ENCODE measurements at regions of chr11 and their contacts with region 1.

Region 1: GRCh38 chr11:104968355-104968855 is at the start of gene CASP4:
- DNase-seq: no peak
- H3K4me3 Mint-ChIP-seq: peak within 1 kb of the TSS; percentile 86
- H3K27ac Mint-ChIP-seq: peak within 1 kb of the TSS; percentile 75
- H3K4me1 Mint-ChIP-seq: peaks cover 34% of the 10 kb centered on the region
- H3K27me3 Mint-ChIP-seq: no peaks in the 10 kb centered on the region
- total RNA-seq, gene CASP4: 31.1 and 32.0 TPM in 2 replicates

Region 2: DNA sequence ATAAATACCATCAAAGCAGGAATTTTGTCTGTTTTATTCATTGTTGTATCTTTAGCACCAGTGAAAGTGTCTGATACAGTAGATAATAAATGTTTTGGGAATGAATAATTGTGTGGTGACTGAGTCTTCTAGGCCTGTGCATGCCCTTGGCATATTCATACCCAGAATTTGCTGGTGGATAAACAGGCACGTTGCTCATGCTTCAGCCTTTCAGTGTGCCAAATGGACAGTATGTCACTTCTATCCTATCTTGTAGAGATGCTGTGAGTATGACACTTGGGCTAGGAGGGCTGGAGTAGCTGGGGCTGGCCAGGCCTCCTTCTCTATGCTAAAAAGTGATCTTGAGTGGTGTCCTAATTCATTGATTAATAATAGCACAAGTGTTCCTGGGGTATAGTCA is 1219.2 kb before region 1 on chr11:
- intact Hi-C with region 1: no loop called
- DNase-seq: no peak
- H3K4me3 Mint-ChIP-seq: no peak overlapping the region
- H3K27ac Mint-ChIP-seq: no peak overlapping the region
- H3K4me1 Mint-ChIP-seq: no peaks in the 10 kb centered on the region
- H3K27me3 Mint-ChIP-seq: no peaks in the 10 kb centered on the region

Region 3: GRCh38 chr11:104918113-104918824 is 50.1 kb before region 1 on chr11:
- intact Hi-C with region 1: loop called (anchors 5 kb)
- DNase-seq: no peak
- H3K4me3 Mint-ChIP-seq: peak overlapping the region; percentile 81
- H3K27ac Mint-ChIP-seq: peak overlapping the region; percentile 71
- H3K4me1 Mint-ChIP-seq: peaks cover 37% of the 10 kb centered on the region
- H3K27me3 Mint-ChIP-seq: no peaks in the 10 kb centered on the region

Region 4: GRCh38 chr11:104946907-104947306 is 21.5 kb before region 1 on chr11:
- intact Hi-C with region 1: loop called (anchors 2 kb)
- DNase-seq: no peak
- H3K4me3 Mint-ChIP-seq: no peak overlapping the region
- H3K27ac Mint-ChIP-seq: no peak overlapping the region
- H3K4me1 Mint-ChIP-seq: peaks cover 5% of the 10 kb centered on the region
- H3K27me3 Mint-ChIP-seq: no peaks in the 10 kb centered on the region

Region 5: DNA sequence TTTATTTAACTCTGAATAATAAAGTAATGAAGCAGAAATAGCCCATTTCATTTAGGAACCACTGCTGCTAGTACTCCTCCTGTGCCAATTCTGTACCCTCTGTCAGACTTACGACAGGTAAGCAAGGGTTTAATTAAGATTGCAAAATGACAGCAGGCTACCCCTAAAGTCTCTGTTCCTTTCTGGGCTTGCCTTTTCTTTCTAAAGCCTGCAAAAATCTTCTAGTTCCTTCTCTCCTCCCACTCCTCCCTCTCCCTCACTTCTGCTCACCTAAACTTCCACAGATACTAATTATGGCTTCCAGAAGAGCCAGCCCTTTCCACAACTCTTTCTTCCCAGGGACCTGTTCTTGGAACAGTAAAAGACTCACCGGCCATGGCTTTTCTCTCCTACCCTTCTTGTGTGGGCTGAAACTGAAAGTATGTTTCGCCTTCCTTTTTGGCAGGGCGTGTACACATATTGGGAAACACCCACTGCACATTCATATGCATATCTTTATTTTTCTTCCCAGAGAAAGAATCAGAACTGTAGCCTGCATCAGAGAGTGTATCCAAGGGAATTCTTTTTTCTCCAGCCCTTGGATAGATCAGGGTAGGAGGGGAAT is 76.6 kb after region 1 on chr11 and contains the start of gene CARD16:
- intact Hi-C with region 1: loop called (anchors 5 kb)
- DNase-seq: peak; percentile 29
- H3K4me3 Mint-ChIP-seq: peak within 1 kb of the TSS; percentile 91
- H3K27ac Mint-ChIP-seq: peak within 1 kb of the TSS; percentile 88
- H3K4me1 Mint-ChIP-seq: peaks cover 38% of the 10 kb centered on the region
- H3K27me3 Mint-ChIP-seq: peaks cover 6% of the 10 kb centered on the region
- total RNA-seq, gene CARD16: 5.2 and 5.8 TPM in 2 replicates